Activated CD4-positive, alpha-beta memory T cell treated with anti-CD3 and anti-CD28 coated beads for 36 hours (primary cell): ENCODE measurements at regions of chr17 and their contacts with region 1.

Region 1: DNA sequence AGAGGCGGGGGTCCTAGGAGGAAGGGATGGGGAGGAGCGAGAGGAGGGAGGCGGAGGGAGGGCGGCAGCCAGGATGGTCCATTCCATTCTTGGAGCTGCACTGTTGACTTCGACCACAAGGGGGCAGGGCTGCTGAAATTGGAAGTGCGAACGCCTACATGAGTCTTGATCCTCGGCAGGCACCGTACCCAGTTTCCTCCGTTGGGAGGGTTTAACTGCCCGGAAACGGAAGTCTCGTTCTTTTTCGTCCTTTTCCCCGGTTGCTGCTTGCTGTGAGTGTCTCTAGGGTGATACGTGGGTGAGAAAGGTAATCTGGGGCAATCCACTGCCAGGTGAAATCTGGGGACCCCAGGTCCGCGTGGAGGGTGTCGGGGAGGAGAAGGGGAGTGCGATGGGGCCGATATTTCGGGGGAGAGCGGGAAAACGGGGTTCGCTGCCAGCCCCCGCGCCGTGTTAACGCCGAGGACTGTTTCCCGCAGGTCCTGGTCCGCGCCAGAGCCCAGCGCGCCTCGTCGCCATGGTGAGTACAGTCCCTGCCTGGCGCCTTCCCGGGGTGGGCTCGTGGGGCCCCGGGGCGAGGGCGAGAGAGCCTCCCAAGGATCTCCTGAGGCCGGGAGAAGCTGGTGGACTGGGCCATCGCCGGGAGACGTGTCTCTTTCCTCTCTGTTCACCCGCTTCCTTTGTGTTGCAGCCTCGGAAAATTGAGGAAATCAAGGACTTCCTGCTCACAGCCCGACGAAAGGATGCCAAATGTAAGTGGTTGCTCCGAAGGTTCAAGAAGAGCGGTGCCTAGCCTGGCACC is at the start of gene RPL38:
- DNase-seq: peak; percentile 97
- H3K4me3 Mint-ChIP-seq: peak within 1 kb of the TSS; percentile 100
- H3K27ac Mint-ChIP-seq: peak within 1 kb of the TSS; percentile 99
- H3K4me1 Mint-ChIP-seq: peaks cover 43% of the 10 kb centered on the region
- H3K27me3 Mint-ChIP-seq: peaks cover 12% of the 10 kb centered on the region
- total RNA-seq, gene RPL38: 1,460 to 1,580 TPM

Region 2: GRCh38 chr17:74089869-74090464 is 113.7 kb before region 1 on chr17:
- CTCF ChIA-PET with region 1: interaction called, 15 read pairs
- POLR2A ChIA-PET with region 1: no interaction called
- intact Hi-C with region 1: loop called (anchors 5 kb)
- DNase-seq: peak; percentile 76
- H3K4me3 Mint-ChIP-seq: no peak overlapping the region
- H3K27ac Mint-ChIP-seq: no peak overlapping the region
- H3K4me1 Mint-ChIP-seq: no peaks in the 10 kb centered on the region
- H3K27me3 Mint-ChIP-seq: peaks cover 1% of the 10 kb centered on the region

Region 3: GRCh38 chr17:74182041-74182723 is 21.5 kb before region 1 on chr17:
- CTCF ChIA-PET with region 1: interaction called, 14 read pairs
- POLR2A ChIA-PET with region 1: no interaction called
- intact Hi-C with region 1: no loop called
- DNase-seq: no peak
- H3K4me3 Mint-ChIP-seq: no peak overlapping the region
- H3K27ac Mint-ChIP-seq: no peak overlapping the region
- H3K4me1 Mint-ChIP-seq: no peaks in the 10 kb centered on the region
- H3K27me3 Mint-ChIP-seq: peaks cover 19% of the 10 kb centered on the region

Region 4: GRCh38 chr17:74190172-74190571 is 13.5 kb before region 1 on chr17:
- CTCF ChIA-PET with region 1: interaction called, 25 read pairs
- POLR2A ChIA-PET with region 1: interaction called, 3 read pairs
- intact Hi-C with region 1: no loop called
- DNase-seq: no peak
- H3K4me3 Mint-ChIP-seq: no peak overlapping the region
- H3K27ac Mint-ChIP-seq: no peak overlapping the region
- H3K4me1 Mint-ChIP-seq: no peaks in the 10 kb centered on the region
- H3K27me3 Mint-ChIP-seq: peaks cover 15% of the 10 kb centered on the region

Region 5: GRCh38 chr17:74245145-74245831 is 41.6 kb after region 1 on chr17:
- CTCF ChIA-PET with region 1: no interaction called
- POLR2A ChIA-PET with region 1: no interaction called
- intact Hi-C with region 1: no loop called
- DNase-seq: no peak
- H3K4me3 Mint-ChIP-seq: no peak overlapping the region
- H3K27ac Mint-ChIP-seq: no peak overlapping the region
- H3K4me1 Mint-ChIP-seq: no peaks in the 10 kb centered on the region
- H3K27me3 Mint-ChIP-seq: no peaks in the 10 kb centered on the region

Region 6: DNA sequence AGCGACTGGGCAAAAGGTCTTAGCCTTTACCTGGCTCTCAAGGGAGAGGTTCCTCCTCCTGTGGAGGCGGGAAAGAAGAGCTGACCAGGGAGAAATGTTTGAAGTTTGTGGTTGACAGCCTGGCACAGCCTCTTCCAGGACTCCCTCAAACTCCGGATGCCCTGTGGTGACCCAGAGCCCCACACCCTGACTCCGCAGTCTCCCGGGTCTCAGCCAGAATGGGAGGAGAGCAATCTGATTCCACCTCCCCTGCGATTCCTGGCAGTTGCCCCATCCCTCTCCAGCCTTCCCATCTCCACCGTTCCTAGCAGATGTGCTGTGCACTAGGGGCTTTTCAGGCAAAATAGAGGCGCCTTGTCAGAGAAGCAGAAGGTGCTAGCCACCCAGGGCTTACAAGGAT is 64.9 kb after region 1 on chr17:
- CTCF ChIA-PET with region 1: no interaction called
- POLR2A ChIA-PET with region 1: no interaction called
- intact Hi-C with region 1: no loop called
- DNase-seq: no peak
- H3K4me3 Mint-ChIP-seq: no peak overlapping the region
- H3K27ac Mint-ChIP-seq: no peak overlapping the region
- H3K4me1 Mint-ChIP-seq: peaks cover 5% of the 10 kb centered on the region
- H3K27me3 Mint-ChIP-seq: peaks cover 2% of the 10 kb centered on the region

Region 7: DNA sequence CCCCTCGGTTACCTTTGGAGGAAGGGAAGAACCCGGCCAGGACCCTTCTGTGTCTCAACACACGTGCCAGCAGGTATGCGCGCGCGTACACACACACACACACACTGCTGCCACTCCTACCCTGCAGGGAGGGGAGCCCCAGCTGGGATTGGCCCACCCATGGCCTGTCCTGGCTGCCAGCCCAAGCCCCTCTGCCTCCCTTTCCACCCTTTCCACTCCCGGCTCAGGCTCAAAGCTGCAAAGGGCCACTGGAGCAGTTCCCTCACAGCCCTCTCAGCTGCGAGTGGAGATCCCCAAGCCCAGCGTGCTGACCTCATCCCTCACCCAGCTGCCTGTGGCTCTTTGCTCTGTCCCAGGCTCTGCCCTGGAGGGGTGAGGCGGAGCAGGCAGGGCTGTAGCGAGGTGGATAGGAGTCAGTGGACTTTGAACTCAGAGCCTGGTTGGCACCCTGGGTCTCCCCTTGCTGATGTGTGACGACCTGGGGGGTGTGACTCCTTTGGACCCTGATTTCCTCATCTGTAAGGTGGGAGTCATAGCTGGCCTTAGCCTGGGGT is 136.9 kb after region 1 on chr17:
- CTCF ChIA-PET with region 1: no interaction called
- POLR2A ChIA-PET with region 1: no interaction called
- intact Hi-C with region 1: no loop called
- DNase-seq: no peak
- H3K4me3 Mint-ChIP-seq: no peak overlapping the region
- H3K27ac Mint-ChIP-seq: no peak overlapping the region
- H3K4me1 Mint-ChIP-seq: no peaks in the 10 kb centered on the region
- H3K27me3 Mint-ChIP-seq: peaks cover 1% of the 10 kb centered on the region